ENCODE measurements at regions of chr11 and their contacts with region 1.

Region 1: GRCh38 chr11:2532704-2533586 is 88.1 kb downstream of the KCNQ1 start:
- DNase-seq: peak; percentile 92
- CTCF ChIP-seq: peak; percentile 99

Region 2: DNA sequence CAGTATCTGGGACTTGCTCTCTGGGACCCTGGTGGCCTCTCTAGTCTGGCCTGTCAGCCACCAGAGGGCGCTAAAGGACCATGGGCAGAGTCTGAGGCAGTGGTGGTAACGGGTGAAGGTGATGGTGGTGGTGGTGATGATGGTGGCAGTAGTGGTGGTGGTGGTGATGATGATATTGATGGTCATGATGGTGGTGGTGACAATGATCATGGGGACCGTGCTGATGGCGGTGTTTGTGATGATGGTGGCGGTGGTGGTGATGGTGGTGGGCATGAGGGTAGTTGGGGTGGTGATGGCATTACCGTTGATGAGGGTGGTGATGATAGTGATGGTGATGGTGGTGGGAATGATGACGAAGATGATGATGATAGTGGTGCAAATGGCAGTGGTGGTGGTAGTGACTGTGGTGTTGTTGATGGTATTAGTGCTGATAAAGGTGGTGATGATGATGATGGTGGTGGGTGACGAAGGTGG is 104.6 kb before region 1 on chr11:
- in situ Hi-C with region 1: loop called (anchors 5 kb)
- DNase-seq: peak; percentile 85
- CTCF ChIP-seq: peak; percentile 90

Region 3: DNA sequence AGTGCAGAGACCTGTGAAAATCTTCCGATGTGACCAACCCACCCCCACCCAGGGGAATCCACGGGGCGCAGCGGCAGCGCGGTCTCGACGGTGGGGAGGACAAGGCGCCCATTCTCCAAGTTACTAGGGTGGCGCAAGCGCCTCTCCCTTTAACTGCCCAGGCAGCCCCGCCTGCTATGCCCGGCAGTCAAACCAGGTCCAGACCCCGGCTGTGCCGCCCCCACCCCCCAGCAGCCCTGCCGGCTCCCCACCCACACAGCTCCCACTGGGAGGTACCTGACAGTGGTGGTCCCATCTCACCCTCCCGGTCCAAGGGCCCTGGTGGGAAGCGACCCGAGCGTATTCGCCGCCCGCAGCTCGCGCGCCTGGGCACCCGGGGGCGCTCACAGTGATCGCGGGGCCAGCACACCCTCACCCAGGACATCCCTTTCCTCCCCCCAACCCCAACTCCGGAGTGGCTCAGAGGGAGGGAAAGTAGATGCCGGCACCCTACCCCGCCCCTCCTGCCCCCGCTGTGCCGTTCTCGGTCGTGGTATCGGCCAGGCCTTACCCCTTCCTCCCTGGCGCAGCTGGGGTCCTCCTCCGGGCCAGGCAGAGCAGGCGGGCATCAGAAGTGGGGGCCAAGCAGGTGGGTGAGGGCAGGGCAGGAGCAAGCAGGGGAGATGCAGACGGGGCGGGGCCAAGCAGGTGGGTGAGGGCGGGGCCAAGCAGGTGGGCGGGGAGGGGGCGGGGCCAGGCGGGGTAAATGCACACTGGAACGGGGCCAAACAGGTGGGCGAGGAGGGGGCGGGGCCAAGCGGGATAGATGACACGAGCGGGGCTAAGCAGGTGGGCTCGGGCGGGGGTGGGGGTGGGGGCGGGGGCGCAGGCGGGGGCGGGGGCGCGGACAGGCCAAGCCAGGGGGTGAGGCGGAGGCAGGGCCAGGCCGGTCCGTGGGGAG is 88.8 kb before region 1 on chr11 and contains the start of gene TRPM5:
- in situ Hi-C with region 1: no loop called
- DNase-seq: peak; percentile 74
- CTCF ChIP-seq: no peak